Activated CD8-positive, alpha-beta T cell treated with anti-CD3 and anti-CD28 coated beads, Interleukin-2, amount 10 ng/mL, durations not matched to agents 7 days and 5 days (primary cell): ENCODE measurements at regions of chr7 and their contacts with region 1.

Region 1: DNA sequence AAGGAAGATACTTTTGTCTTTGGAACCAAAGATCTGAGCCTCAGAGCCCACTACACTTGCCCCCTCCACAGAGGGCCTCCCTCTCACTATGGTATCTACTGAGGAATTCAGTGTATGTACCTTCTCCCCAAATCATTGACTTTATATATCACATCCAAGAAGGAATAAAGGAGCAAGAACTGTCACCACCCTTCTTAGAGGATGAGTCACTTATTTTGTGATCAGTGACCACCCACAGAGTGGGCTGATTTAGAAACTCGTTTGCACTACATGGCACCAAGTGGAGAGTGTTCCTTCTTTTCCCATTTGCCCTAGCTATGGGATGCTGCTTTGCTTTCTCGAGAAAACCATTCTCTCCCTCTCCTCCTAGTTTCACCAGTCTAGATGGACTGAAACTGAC is 5.7 kb downstream of the TMEM243 start:
- DNase-seq: no peak
- ATAC-seq: no peak
- H3K4me3 Mint-ChIP-seq: peak overlapping the region; percentile 10
- H3K27ac Mint-ChIP-seq: peak overlapping the region; percentile 94
- H3K4me1 Mint-ChIP-seq: peaks cover 75% of the 10 kb centered on the region
- H3K27me3 Mint-ChIP-seq: no peaks in the 10 kb centered on the region

Region 2: GRCh38 chr7:87199700-87200450 is 13.9 kb before region 1 on chr7:
- CTCF ChIA-PET with region 1: interaction called, 11 read pairs
- POLR2A ChIA-PET with region 1: interaction called, 18 read pairs
- DNase-seq: no peak
- ATAC-seq: no peak
- H3K4me3 Mint-ChIP-seq: no peak overlapping the region
- H3K27ac Mint-ChIP-seq: peak overlapping the region; percentile 43
- H3K4me1 Mint-ChIP-seq: peaks cover 19% of the 10 kb centered on the region
- H3K27me3 Mint-ChIP-seq: no peaks in the 10 kb centered on the region